ENCODE measurements at regions of chr18 and their contacts with region 1.

Region 1: GRCh38 chr18:6920099-6920899 is 190.8 kb downstream of the ARHGAP28 start:
- DNase-seq: peak; percentile 44 to 80 (median 48)
- ATAC-seq: peak; percentile 89
- H3K4me3 ChIP-seq: no peak overlapping the region
- H3K27ac ChIP-seq: no peak overlapping the region
- H3K4me1 ChIP-seq: peaks cover 0 to 8% of the 10 kb centered on the region in 2 experiments; a peak in 1 of 5 replicates
- H3K27me3 ChIP-seq: peaks cover 5 to 8% of the 10 kb centered on the region in 2 experiments; a peak in 2 of 5 replicates
- CTCF ChIP-seq: peak; percentile 89 to 96 (median 96)
- EP300 ChIP-seq: no peak
- POLR2A ChIP-seq: no peak
- RAD21 ChIP-seq: peak; percentile 93 to 96

Region 2: GRCh38 chr18:6963452-6964097 is 43.3 kb after region 1 on chr18:
- CTCF ChIA-PET with region 1: no interaction called
- POLR2A ChIA-PET with region 1: no interaction called
- in situ Hi-C with region 1: no loop called
- intact Hi-C with region 1: no loop called
- DNase-seq: no peak
- ATAC-seq: no peak
- H3K4me3 ChIP-seq: no peak overlapping the region
- H3K27ac ChIP-seq: no peak overlapping the region
- H3K4me1 ChIP-seq: no peaks in the 10 kb centered on the region
- H3K27me3 ChIP-seq: peaks cover 16 to 23% of the 10 kb centered on the region in 2 experiments; a peak in 4 of 5 replicates
- CTCF ChIP-seq: no peak
- EP300 ChIP-seq: no peak
- POLR2A ChIP-seq: no peak
- RAD21 ChIP-seq: no peak

Region 3: GRCh38 chr18:7000484-7001096 is 80.3 kb after region 1 on chr18:
- CTCF ChIA-PET with region 1: interaction called, 6 read pairs
- POLR2A ChIA-PET with region 1: no interaction called
- in situ Hi-C with region 1: loop called (anchors 5 kb)
- intact Hi-C with region 1: loop called (anchors 1 kb)
- DNase-seq: peak in 2 of 4 experiments; percentile 15 to 22
- ATAC-seq: peak; percentile 83
- H3K4me3 ChIP-seq: no peak overlapping the region
- H3K27ac ChIP-seq: no peak overlapping the region
- H3K4me1 ChIP-seq: no peaks in the 10 kb centered on the region; a peak in 1 of 5 replicates
- H3K27me3 ChIP-seq: peaks cover 14 to 37% of the 10 kb centered on the region in 2 experiments; a peak in 3 of 5 replicates
- CTCF ChIP-seq: peak; percentile 44 to 64 (median 56); a peak in 5 of 6 replicates
- EP300 ChIP-seq: no peak
- POLR2A ChIP-seq: no peak
- RAD21 ChIP-seq: peak; percentile 66 to 71

Region 4: DNA sequence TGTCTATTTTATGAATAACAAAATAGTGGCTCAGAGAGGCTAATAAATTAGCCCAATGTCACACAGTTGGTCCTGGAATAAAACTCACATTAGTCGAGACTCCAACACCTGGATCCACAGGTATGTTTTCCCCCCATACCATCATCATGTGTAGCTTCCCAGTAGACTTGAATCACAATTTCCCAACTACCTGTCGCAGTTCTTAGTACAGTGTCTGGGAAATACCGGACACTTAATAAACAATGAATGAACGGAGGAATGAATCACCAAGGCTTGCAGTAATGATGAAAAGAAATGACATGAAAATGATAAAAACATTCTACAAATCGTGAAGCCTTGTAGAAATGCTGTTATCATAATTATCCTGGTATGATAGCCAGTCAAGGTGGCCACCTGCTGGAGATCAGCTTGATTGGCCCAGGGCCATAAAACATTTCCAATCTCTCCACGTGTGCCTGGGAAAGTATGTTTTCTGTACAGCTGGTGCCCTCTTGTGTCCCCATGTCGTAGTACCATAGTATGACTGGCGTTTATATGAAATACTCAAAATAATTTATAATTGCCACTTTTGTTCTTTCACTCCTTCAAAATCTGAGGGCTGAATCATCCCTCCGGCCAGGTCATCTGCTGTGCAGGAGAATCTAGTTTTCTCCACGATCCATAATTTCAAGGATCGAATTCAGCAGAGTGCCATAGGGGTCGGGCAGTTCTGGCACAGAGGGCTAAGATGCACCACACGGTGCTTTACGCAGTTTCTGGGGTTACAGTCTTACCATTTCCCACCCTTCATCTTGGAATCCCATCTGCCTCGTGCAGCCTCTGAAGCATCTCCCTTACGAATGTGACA is 101.9 kb after region 1 on chr18:
- CTCF ChIA-PET with region 1: interaction called, 16 read pairs
- POLR2A ChIA-PET with region 1: no interaction called
- in situ Hi-C with region 1: no loop called
- intact Hi-C with region 1: loop called (anchors 1 kb)
- DNase-seq: peak; percentile 50 to 64 (median 57)
- ATAC-seq: peak; percentile 85
- H3K4me3 ChIP-seq: no peak overlapping the region
- H3K27ac ChIP-seq: no peak overlapping the region
- H3K4me1 ChIP-seq: no peaks in the 10 kb centered on the region
- H3K27me3 ChIP-seq: peaks cover 15 to 44% of the 10 kb centered on the region in 2 experiments; a peak in 3 of 5 replicates
- CTCF ChIP-seq: peak; percentile 66 to 85 (median 82)
- EP300 ChIP-seq: no peak
- POLR2A ChIP-seq: no peak
- RAD21 ChIP-seq: peak; percentile 69 to 79

Region 5: DNA sequence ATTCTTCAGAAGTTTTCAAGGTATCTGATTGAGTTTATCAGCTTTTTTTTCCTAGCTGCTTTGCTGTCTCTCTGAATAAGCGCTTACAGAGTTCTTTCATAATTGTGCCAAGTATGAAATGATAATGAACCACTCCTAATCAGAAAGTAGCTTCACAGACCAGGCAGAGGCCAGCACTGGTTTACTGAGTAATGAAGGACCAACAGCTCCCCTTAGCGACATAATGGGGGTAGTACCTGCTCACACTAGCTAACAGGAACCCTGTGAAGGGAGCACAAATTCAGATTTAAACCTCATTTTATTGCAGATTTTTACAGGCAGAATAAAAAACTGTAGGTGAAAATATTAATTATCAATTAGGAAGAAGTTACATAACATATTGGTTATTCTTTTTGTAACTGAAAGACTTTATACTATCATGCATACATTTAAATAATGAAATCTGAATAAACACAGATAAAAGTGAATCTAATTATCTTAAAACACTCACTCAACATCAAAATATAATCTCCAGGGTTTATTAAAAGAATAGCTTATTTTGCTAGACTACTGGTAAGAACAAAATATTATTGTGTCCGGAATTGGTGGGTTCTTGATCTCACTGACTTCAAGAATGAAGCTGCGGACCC is 256.9 kb after region 1 on chr18:
- CTCF ChIA-PET with region 1: interaction called, 12 read pairs
- POLR2A ChIA-PET with region 1: no interaction called
- in situ Hi-C with region 1: loop called (anchors 10 kb)
- intact Hi-C with region 1: loop called (anchors 1 kb)
- DNase-seq: peak; percentile 63 to 73 (median 68)
- ATAC-seq: peak; percentile 97
- H3K4me3 ChIP-seq: no peak overlapping the region
- H3K27ac ChIP-seq: no peak overlapping the region
- H3K4me1 ChIP-seq: no peaks in the 10 kb centered on the region
- H3K27me3 ChIP-seq: peaks cover 9 to 28% of the 10 kb centered on the region in 2 experiments; a peak in 3 of 5 replicates
- CTCF ChIP-seq: peak; percentile 69 to 77 (median 70)
- EP300 ChIP-seq: no peak
- POLR2A ChIP-seq: no peak
- RAD21 ChIP-seq: peak; percentile 67 to 76